ENCODE measurements at regions of chr9 and their contacts with region 1.

Region 1: DNA sequence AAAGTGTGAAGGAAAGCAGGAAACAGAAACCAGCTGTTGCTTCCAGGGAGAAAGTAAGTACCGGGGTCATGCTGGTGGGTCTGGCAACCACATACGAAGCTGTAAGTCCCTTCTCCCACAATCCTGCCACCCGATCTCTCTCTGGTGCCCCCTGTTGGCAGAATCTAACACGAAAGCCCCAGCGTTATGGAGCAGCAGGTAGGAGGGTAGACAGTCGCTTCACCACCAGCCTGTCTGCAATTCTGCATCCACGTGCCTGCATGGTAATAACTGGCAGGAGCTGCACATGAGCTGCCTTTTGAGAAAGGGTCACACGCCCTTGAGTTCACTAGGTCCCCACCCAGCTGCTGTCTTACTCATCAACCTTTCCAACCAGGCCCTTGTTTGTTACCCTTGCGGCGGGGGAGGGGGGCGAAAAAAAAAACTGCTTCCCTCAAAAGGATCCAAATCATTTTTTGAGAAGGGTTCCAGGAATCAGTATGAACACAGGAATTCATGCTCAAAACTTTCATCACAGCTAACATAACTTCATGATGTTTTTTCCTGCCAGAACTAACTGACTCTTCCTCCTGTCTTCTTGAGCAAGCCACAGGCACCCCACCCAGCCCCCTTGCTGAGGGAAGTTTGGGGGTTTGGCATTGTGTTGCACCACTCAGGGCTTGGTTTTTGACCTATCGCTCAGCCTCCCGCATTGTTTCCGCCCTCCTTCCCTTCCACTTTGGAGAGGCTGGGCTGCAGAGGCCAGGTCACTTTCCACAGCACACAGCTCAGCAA is 19.6 kb upstream of the TMEM252 start:
- DNase-seq: peak; percentile 10 to 51 (median 17)
- H3K4me3 ChIP-seq: no peak overlapping the region
- H3K4me3 Mint-ChIP-seq: peak overlapping the region in 2 of 8 donors; percentile 9 to 11
- H3K27ac ChIP-seq: no peak overlapping the region
- H3K27ac Mint-ChIP-seq: no peak overlapping the region
- H3K4me1 ChIP-seq: peaks cover 7% of the 10 kb centered on the region
- H3K4me1 Mint-ChIP-seq: peaks cover 0 to 8% (median 5%) of the 10 kb centered on the region in 4 donors
- H3K27me3 ChIP-seq: peaks cover 9% of the 10 kb centered on the region
- H3K27me3 Mint-ChIP-seq: peaks cover 26% of the 10 kb centered on the region in 2 donors

Region 2: GRCh38 chr9:68574150-68574549 is 13.9 kb after region 1 on chr9:
- CTCF ChIA-PET with region 1: interaction called, 11 read pairs
- POLR2A ChIA-PET with region 1: no interaction called
- intact Hi-C with region 1: no loop called
- DNase-seq: no peak
- H3K4me3 ChIP-seq: no peak overlapping the region
- H3K4me3 Mint-ChIP-seq: no peak overlapping the region
- H3K27ac ChIP-seq: no peak overlapping the region
- H3K27ac Mint-ChIP-seq: no peak overlapping the region
- H3K4me1 ChIP-seq: no peaks in the 10 kb centered on the region
- H3K4me1 Mint-ChIP-seq: no peaks in the 10 kb centered on the region
- H3K27me3 ChIP-seq: no peaks in the 10 kb centered on the region
- H3K27me3 Mint-ChIP-seq: peaks cover 16 to 21% of the 10 kb centered on the region in 2 donors

Region 3: GRCh38 chr9:68643901-68644809 is 83.9 kb after region 1 on chr9:
- CTCF ChIA-PET with region 1: no interaction called
- POLR2A ChIA-PET with region 1: no interaction called
- intact Hi-C with region 1: no loop called
- DNase-seq: no peak
- H3K4me3 ChIP-seq: no peak overlapping the region
- H3K4me3 Mint-ChIP-seq: no peak overlapping the region
- H3K27ac ChIP-seq: no peak overlapping the region
- H3K27ac Mint-ChIP-seq: no peak overlapping the region
- H3K4me1 ChIP-seq: no peaks in the 10 kb centered on the region
- H3K4me1 Mint-ChIP-seq: peaks cover 0 to 3% (median 0%) of the 10 kb centered on the region in 4 donors
- H3K27me3 ChIP-seq: no peaks in the 10 kb centered on the region
- H3K27me3 Mint-ChIP-seq: peaks cover 3 to 5% of the 10 kb centered on the region in 2 donors

Region 4: DNA sequence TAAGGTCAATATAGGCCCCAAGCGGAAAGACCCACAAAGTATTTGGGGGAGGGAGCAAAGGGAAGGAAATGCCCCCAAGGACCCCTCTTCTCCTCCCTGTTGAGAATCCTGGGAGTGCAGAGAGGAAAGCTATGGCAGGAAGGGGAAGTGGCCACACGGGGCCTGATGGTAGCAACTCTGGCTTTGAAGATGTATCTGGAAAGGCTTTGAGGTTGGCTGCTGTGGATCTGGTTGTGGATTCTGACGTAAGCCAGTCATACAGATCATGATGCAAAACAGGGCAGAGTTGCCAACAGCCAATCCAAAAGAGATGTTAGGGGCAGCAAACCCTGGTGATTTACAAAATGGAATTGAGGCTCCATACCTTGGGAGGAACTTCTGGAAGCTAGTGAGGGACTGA is 344.9 kb after region 1 on chr9:
- CTCF ChIA-PET with region 1: no interaction called
- POLR2A ChIA-PET with region 1: no interaction called
- intact Hi-C with region 1: no loop called
- DNase-seq: no peak
- H3K4me3 ChIP-seq: no peak overlapping the region
- H3K4me3 Mint-ChIP-seq: no peak overlapping the region
- H3K27ac ChIP-seq: no peak overlapping the region
- H3K27ac Mint-ChIP-seq: no peak overlapping the region
- H3K4me1 ChIP-seq: peaks cover 11% of the 10 kb centered on the region
- H3K4me1 Mint-ChIP-seq: peaks cover 0 to 6% (median 0%) of the 10 kb centered on the region in 4 donors
- H3K27me3 ChIP-seq: no peaks in the 10 kb centered on the region
- H3K27me3 Mint-ChIP-seq: peaks cover 2 to 3% of the 10 kb centered on the region in 2 donors